Activated T-helper 2 cell treated with anti-CD3 and anti-CD28 coated beads, Interferon-gamma antibody, Interleukin-2, Interleukin-4, amounts not matched to agents 10 μg/mL and 5 μg/mL and 100 μg/mL, durations not matched to agents 14 hours and 24 hours and 36 hours (primary cell): ENCODE measurements at regions of chr2 and their contacts with region 1.

Region 1: GRCh38 chr2:112995346-112995920 is 9.8 kb upstream of the IL36A start:
- DNase-seq: no peak
- H3K4me3 Mint-ChIP-seq: peak overlapping the region; percentile 51
- H3K27ac Mint-ChIP-seq: peak overlapping the region; percentile 71
- H3K4me1 Mint-ChIP-seq: peaks cover 31% of the 10 kb centered on the region
- H3K27me3 Mint-ChIP-seq: no peaks in the 10 kb centered on the region

Region 2: DNA sequence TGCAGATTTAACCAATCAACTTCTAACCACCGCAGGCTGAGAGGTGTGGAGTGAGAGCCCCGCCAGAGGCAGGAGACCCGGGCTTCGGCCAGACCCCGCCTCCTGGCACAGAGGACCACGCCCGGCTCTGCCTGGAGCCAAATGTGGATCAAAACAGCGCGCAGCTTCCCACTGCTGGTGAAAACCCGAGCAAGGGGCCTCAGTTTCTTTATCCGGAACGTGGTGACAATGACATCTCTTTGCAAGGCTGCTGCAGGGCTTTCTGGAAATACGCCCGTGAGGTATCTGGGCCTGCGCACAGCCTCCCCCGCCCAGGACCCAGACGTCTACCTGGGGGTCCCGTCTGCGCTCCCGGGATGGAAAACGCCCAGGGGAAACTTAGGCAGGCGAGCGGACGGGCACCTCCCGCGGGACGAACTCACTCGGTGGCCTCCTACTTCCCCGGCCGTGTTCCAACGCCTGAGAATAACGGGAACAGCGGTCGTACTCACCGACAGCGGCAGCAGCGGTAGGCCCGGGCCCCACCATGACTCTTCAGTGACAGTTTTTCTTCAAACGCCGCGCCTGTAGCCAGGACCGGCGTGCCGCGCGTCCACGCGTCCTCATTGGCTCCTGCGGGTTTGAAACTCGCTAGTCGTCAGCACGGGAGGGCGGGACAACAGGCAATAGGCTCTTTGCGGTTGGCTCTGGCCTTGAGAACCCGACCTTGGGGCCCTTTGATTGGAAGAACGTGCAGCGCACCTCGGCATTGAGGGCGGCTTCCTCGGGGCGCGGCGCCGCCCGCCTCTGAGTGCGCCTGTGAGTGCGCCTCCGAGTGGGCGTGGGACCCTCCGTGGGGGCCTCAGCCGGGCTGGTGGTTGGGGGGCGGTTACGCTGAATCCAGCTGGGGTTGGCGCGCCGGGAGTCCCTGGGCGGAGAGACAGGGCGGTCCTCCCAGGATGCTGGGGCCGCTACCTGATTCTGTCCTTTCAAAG is 231.1 kb before region 1 on chr2 and contains the start of gene CKAP2L:
- intact Hi-C with region 1: no loop called
- DNase-seq: peak; percentile 97
- H3K4me3 Mint-ChIP-seq: peak within 1 kb of the TSS; percentile 85
- H3K27ac Mint-ChIP-seq: peak within 1 kb of the TSS; percentile 96
- H3K4me1 Mint-ChIP-seq: peaks cover 53% of the 10 kb centered on the region
- H3K27me3 Mint-ChIP-seq: no peaks in the 10 kb centered on the region
- total RNA-seq, gene CKAP2L: 24.4 and 27.2 TPM in 2 replicates

Region 3: GRCh38 chr2:112985090-112985489 is 10.3 kb before region 1 on chr2:
- intact Hi-C with region 1: loop called (anchors 2 kb)
- DNase-seq: peak; percentile 41
- H3K4me3 Mint-ChIP-seq: no peak overlapping the region
- H3K27ac Mint-ChIP-seq: peak overlapping the region; percentile 60
- H3K4me1 Mint-ChIP-seq: peaks cover 25% of the 10 kb centered on the region
- H3K27me3 Mint-ChIP-seq: no peaks in the 10 kb centered on the region

Region 4: GRCh38 chr2:113225263-113226259 is 230.1 kb after region 1 on chr2:
- intact Hi-C with region 1: no loop called
- DNase-seq: no peak
- H3K4me3 Mint-ChIP-seq: no peak overlapping the region
- H3K27ac Mint-ChIP-seq: no peak overlapping the region
- H3K4me1 Mint-ChIP-seq: peaks cover 23% of the 10 kb centered on the region
- H3K27me3 Mint-ChIP-seq: peaks cover 7% of the 10 kb centered on the region